HEK293 (cell line): ENCODE measurements at regions of chr17 and their contacts with region 1.

Region 1: DNA sequence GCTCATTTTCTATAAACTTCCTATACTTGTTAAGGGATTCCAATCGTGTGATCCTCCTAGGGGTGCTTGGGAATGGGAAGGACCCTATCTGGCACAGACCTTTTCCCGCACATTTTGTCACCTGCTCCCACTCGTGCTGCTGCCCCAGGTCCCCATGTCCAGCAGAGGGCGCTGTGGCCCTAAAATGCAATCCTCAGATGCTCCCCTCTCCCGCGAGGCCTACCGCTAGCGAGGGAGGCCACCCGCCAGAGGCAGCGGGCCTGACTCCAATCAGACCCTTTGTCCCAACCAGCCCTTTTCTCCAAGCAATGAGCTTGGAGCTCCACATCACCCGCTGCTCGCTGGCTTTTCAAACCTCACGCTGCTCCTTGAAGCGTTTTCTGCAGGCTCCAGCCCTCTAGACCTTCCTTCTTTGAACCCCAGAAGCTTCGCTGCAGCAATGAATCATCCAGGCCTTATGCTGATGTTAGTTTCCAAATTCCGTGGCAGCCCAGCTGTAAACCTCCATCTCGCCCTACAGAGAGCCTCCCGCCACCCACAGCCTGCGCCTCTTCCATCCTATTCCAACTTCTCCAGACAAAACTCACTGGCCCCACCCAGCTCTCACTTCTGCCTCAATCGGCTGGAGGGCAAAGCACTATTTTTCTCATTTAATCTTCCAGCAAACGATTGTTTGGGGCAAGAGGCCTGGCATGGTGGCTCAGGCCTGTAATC is 23.6 kb upstream of the FZD2 start:
- H3K4me3 ChIP-seq: no peak overlapping the region
- H3K27ac ChIP-seq: peak overlapping the region; percentile 58
- H3K4me1 ChIP-seq: no peaks in the 10 kb centered on the region; the same call in 1 of the 2 replicates
- CTCF ChIP-seq: peak; percentile 97

Region 2: DNA sequence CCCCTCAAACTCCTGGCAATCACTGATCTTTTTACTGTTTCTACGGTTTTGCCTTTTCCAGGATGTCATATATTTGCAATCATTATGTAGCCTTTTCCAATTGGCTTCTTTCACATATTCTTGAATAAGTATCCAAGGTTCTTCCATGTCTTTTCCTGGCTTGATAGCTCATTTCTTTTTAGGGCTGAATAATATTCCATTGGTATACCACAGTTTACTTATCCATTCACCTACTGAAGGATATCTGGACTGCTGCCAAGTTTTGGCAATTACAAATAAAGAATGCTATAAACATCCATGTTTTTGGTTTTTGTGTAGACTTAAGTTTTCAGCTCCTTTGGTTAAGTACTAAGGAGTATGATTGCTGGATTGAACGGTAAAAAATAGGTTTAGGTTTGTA is 46.5 kb before region 1 on chr17:
- CTCF ChIA-PET with region 1: no interaction called
- POLR2A ChIA-PET with region 1: no interaction called
- H3K4me3 ChIP-seq: no peak overlapping the region
- H3K27ac ChIP-seq: no peak overlapping the region
- H3K4me1 ChIP-seq: no peaks in the 10 kb centered on the region
- CTCF ChIP-seq: no peak

Region 3: DNA sequence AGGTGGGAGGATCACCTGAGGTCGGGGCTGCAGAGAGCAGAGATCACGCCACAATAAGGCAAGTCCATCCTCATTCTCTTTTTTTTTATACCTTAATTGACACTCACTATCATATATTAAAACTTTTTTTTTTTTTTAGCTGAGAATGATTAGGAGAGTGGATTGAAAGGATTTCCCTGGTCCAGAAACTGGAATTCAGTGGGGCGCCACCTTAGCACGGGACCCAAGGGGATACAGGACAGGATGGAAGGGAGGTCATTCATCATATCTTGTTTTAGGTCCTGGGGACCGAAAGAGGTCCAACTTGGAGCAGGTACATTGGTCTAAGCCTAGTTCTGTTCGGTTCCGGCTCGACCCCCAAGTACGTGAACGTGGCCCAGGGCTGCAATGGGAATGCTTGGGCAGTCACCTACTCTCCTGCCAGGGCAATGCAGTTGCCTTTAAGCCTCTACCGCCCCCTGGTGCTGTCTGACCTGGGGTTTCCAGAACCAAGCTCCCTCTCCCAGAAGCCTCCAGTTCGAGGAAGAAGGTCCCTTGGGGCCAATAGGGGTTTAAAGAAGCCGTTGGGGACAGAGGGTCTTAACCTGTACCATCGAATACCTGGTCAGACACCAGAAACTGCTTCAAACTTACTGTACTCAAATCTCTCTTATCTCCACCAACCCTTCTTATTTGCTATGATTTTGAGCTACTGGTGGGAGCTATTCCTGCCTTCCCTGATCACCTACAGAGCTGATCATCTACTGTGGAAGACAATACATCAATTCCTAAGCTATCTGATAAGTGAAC is 10.6 kb before region 1 on chr17:
- CTCF ChIA-PET with region 1: interaction called, 45 read pairs
- POLR2A ChIA-PET with region 1: no interaction called
- H3K4me3 ChIP-seq: no peak overlapping the region
- H3K27ac ChIP-seq: no peak overlapping the region
- H3K4me1 ChIP-seq: no peaks in the 10 kb centered on the region
- CTCF ChIP-seq: peak; percentile 78

Region 4: DNA sequence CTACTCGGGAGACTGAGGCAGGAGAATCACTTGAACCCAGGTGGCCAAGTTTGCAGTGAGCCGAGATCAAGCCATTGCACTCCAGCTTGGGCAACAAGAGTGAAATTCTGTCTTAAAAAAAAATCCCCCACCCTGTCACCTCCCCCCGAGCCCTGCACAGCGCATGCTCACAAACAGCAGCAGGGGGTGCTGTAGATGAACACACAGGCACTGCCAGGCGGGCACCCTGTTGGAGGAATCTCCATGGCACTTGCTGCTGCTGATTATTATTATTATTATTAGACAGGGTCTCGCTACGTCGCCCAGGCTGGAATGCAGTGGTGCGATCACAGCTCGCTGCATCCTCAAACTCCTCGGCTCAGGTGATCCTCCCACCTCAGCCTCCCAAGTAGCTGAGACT is 48.2 kb after region 1 on chr17:
- CTCF ChIA-PET with region 1: interaction called, 17 read pairs
- POLR2A ChIA-PET with region 1: interaction called, 3 read pairs
- H3K4me3 ChIP-seq: no peak overlapping the region
- H3K27ac ChIP-seq: no peak overlapping the region
- H3K4me1 ChIP-seq: no peaks in the 10 kb centered on the region
- CTCF ChIP-seq: no peak

Region 5: DNA sequence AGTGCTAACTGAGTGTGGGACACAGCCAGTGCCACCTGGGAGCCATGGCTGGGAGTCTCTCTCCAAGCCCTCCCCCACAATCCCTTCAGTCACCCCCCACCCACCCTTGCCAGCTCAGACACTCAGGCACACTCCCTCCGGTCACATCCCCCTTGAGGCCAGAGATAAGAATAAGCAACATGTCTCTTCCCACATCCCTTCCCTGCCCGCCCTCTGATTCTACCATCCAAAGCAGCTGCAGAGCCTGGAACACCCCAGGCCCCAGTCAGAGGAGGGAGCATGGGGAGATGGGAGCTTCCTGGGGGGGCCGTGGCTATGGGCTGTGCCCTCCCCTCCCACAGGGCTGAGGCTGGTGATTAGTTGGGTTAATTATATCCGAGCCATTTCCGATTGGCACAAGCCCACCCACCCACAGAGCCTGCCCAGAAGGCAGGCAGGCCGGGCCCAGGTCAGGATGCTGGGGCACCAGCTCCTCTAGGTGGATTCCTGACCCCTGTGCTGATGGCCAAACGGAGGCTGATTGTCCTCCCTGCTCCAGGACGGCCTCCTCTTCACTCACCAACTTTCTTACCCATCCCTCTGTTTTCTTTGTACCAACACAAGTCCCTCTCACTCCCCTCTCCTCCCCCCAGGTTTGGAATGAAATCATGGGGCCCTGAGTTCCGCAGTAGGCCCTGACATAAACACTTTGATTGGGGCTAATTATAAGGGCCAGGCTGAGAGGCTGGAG is 94.0 kb after region 1 on chr17:
- CTCF ChIA-PET with region 1: interaction called, 100 read pairs
- POLR2A ChIA-PET with region 1: no interaction called
- H3K4me3 ChIP-seq: no peak overlapping the region
- H3K27ac ChIP-seq: no peak overlapping the region
- H3K4me1 ChIP-seq: no peaks in the 10 kb centered on the region
- CTCF ChIP-seq: no peak

Region 6: GRCh38 chr17:44655983-44656710 is 122.5 kb after region 1 on chr17 and contains the start of gene MEIOC:
- CTCF ChIA-PET with region 1: interaction called, 10 read pairs
- POLR2A ChIA-PET with region 1: no interaction called
- H3K4me3 ChIP-seq: peak within 1 kb of the TSS; percentile 41
- H3K27ac ChIP-seq: peak within 1 kb of the TSS; percentile 69; the same call in 1 of the 2 replicates
- H3K4me1 ChIP-seq: no peaks in the 10 kb centered on the region
- CTCF ChIP-seq: no peak

Region 7: DNA sequence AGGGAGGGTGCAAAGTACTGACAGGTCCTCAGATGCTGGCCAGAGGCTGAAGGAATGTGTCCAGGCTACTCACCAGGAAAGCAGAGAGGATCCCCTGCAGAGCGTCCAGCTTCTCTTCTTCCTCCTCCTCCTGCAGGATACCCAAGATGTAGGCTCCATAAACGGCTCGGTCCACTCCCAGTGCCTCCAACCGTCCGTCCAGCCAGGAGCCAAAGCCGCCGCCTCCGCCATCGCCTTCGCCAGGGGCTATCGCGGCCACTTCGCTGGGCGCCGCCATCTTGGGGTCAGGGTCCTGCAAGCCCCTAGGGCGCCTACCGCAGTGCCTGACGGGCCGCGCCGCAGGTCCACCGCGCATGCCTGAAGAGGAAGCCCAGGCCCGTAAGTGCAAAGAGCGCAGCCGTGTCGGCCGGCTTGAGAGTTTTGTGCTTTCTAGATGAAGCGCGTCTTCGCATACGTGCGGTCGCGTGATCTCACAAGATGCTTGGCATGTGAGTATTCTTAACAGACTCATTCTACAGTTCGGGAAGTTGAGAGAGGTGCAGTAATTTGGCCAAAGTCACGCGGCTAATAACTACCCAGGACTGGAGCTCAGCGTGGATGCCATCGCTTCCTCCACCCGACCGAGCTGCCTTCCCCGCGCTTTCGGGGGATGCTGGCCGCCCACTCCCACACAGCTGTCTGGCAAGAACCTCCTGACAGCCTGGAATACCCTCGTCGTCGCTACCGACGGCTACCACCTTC is 156.0 kb after region 1 on chr17 and contains the start of gene CCDC43:
- CTCF ChIA-PET with region 1: interaction called, 16 read pairs
- POLR2A ChIA-PET with region 1: no interaction called
- H3K4me3 ChIP-seq: peak within 1 kb of the TSS; percentile 86
- H3K27ac ChIP-seq: peak within 1 kb of the TSS; percentile 72
- H3K4me1 ChIP-seq: peaks cover 2% of the 10 kb centered on the region; the same call in 1 of the 2 replicates
- CTCF ChIP-seq: no peak